Sigmoid colon (tissue), 7 donors: ENCODE measurements at regions of chr2 and their contacts with region 1.

Region 1: DNA sequence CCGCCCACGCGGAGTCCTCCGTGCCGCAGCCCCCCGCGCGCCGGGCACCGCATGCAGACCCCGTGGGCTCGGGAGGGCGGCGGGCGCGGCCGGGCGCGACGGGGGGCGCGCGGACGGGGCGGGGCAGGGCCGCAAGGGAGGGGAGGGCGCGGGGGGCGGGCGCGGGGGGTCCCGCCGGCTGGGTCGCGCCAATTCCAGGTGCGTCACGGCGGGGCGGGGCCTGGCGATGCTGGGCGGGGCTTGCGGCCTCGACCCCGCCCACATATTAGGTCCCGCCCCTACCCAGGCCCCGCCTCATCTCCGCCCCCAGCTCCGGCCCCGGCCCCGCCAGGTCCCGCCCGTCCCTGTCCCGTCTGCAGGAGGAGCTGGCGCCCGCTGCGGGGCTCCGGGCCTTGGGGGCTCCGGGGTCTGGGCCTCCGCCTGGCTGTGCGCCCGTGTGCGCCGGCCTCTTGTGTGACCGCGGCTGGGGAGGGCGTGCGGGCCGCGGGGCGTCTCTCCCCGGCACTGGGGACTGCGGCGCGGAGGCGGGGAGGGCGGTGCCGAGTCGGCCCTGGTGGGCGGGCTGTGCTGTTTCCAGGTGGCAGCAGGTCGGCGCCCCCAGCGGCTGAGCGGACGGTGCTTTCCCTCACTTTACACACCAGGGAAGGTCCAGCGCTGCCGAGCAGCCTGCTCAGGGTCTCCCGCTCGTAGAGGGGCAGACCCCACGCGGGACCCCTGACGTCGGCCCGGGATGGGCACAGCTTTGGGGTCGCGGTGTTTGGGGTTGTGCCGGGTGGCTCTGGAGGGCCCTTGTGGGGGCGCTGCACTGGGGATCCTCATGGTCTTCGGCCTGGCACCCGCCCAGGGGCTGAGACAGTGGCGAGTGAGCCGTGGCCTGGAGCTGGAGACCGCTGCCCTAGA is 543 bp downstream of the ING5 start:
- DNase-seq: peak; percentile 94
- H3K4me3 ChIP-seq: peak overlapping the region; percentile 67 to 91 (median 86)
- H3K27ac ChIP-seq: peak overlapping the region; percentile 86 to 95 (median 93)
- H3K4me1 ChIP-seq: peaks cover 0 to 25% (median 18%) of the 10 kb centered on the region in 4 donors
- H3K27me3 ChIP-seq: no peaks in the 10 kb centered on the region
- CTCF ChIP-seq: peak in 1 of 4 experiments; percentile 23
- EP300 ChIP-seq: no peak
- POLR2A ChIP-seq: no peak

Region 2: GRCh38 chr2:241508240-241509154 is 193.9 kb before region 1 on chr2 and contains the start of gene STK25:
- intact Hi-C with region 1: loop called (anchors 5 kb)
- DNase-seq: peak; percentile 99
- H3K4me3 ChIP-seq: peak within 1 kb of the TSS; percentile 65 to 99 (median 76)
- H3K27ac ChIP-seq: peak within 1 kb of the TSS; percentile 82 to 91 (median 90)
- H3K4me1 ChIP-seq: peaks cover 0 to 43% (median 40%) of the 10 kb centered on the region in 4 donors
- H3K27me3 ChIP-seq: no peaks in the 10 kb centered on the region
- CTCF ChIP-seq: peak in 1 of 4 experiments; percentile 2
- EP300 ChIP-seq: peak in 1 of 4 donors; percentile 38
- POLR2A ChIP-seq: peak in 1 of 2 donors; percentile 29
- total RNA-seq, gene STK25: 125 to 266 (median 178) TPM

Region 3: GRCh38 chr2:241673797-241674725 is 28.3 kb before region 1 on chr2:
- intact Hi-C with region 1: no loop called
- DNase-seq: no peak
- H3K4me3 ChIP-seq: no peak overlapping the region
- H3K27ac ChIP-seq: peak overlapping the region in 2 of 4 donors; percentile 34 to 43
- H3K4me1 ChIP-seq: peaks cover 0 to 7% (median 0%) of the 10 kb centered on the region in 4 donors
- H3K27me3 ChIP-seq: no peaks in the 10 kb centered on the region
- CTCF ChIP-seq: no peak
- EP300 ChIP-seq: no peak
- POLR2A ChIP-seq: no peak

Region 4: GRCh38 chr2:241686649-241687425 is 15.5 kb before region 1 on chr2 and contains the start of gene DTYMK:
- intact Hi-C with region 1: loop called (anchors 2 kb)
- DNase-seq: peak; percentile 98
- H3K4me3 ChIP-seq: peak within 1 kb of the TSS; percentile 79 to 95 (median 84)
- H3K27ac ChIP-seq: peak within 1 kb of the TSS; percentile 93 to 95 (median 94)
- H3K4me1 ChIP-seq: peaks cover 0 to 34% (median 25%) of the 10 kb centered on the region in 4 donors
- H3K27me3 ChIP-seq: no peaks in the 10 kb centered on the region
- CTCF ChIP-seq: no peak
- EP300 ChIP-seq: no peak
- POLR2A ChIP-seq: peak; percentile 18 to 37
- total RNA-seq, gene DTYMK: 7.4 to 13.8 (median 10.8) TPM

Region 5: DNA sequence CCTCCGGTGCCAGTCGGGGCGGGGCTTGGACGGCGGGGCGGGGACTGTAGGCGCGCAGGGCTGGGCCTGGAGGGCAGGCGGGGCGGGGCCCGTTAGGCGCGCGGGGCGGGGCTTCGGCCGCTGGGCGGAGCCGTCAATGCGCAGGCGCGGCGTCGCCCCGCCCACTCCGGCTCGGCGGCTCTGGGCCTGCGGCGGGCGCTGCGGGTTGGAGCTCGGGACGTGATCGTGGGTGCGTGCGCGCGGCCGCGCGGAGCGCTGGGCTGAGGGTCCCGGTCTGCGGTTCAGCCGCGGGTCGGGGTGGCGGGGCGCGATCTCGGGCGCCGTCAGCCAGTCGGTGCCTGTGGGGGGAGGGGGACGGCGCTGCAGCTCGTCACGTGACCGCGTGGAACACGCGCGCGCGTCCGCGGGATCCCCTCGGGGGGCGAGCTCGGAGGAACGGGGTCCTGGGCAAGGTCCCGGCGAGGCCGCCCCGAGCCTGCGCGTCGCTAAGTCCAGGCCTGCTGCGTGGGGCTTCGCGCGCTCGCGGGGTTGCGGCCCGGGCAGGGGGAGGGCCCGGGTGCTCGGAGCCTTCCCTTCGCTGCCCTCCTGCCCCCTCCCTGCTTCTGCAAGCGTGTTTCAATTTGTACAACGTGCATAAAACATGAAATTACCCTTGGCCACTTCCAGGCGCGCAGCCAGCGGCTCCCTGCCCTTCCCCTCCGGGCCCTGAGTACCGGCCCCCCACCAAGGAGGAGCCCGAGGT is 32.3 kb after region 1 on chr2 and contains the start of gene D2HGDH:
- intact Hi-C with region 1: loop called (anchors 2 kb)
- DNase-seq: peak; percentile 97
- H3K4me3 ChIP-seq: peak within 1 kb of the TSS; percentile 66 to 93 (median 80)
- H3K27ac ChIP-seq: peak within 1 kb of the TSS; percentile 88 to 95 (median 93)
- H3K4me1 ChIP-seq: peaks cover 0 to 22% (median 12%) of the 10 kb centered on the region in 4 donors
- H3K27me3 ChIP-seq: no peaks in the 10 kb centered on the region
- CTCF ChIP-seq: no peak
- EP300 ChIP-seq: no peak
- POLR2A ChIP-seq: no peak
- total RNA-seq, gene D2HGDH: 10.7 to 26.9 (median 13.3) TPM

Region 6: GRCh38 chr2:241877989-241878970 is 175.9 kb after region 1 on chr2:
- intact Hi-C with region 1: loop called (anchors 5 kb)
- DNase-seq: peak; percentile 84
- H3K4me3 ChIP-seq: no peak overlapping the region
- H3K27ac ChIP-seq: no peak overlapping the region
- H3K4me1 ChIP-seq: peaks cover 0 to 20% (median 16%) of the 10 kb centered on the region in 4 donors
- H3K27me3 ChIP-seq: no peaks in the 10 kb centered on the region
- CTCF ChIP-seq: peak; percentile 18 to 66 (median 52)
- EP300 ChIP-seq: no peak
- POLR2A ChIP-seq: no peak